ENCODE measurements at regions of chr3 and their contacts with region 1.

Region 1: DNA sequence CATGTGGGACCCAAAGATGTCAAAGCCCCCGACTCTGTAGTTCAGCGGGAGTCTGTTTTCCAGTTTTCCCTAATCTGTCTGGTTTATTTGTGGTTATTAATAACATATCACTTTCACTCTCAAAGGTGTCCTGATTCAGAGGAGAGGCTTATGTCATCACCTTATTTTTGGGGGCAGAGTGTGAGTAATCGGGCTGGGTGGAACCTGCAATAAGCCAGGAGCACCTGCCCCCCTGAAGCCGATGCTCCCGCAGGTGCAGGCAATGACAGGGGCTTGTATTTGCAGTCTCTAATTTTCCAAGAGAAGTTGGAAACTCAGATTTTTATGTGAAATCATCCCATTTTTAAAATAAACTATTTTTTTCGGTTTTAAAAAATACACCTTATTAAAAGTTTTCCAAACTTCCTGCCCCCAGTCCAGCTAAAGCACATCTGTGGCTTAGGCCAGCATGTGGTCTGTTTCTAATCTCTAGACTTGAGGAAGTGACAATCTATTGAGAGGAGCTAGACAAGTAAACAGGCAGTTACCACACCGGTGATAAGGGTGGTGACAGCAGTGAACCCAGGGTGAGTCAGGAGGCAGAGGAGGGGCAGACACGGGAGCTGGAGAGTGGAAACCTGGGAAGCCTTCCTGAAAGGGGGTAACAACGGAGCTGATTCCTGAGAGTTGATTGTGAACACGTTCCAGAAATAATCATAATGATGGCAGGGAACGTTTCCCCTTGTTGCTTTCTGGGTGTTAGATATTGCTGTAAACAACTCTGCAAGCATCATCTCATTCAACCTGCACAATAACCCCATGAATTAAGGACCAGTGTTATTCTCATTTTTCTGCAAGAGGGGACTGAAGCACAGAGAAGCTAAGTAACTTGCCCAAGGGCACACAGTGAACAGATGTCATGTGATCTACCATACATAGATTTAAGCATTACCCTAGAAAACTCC is 37.3 kb downstream of the BHLHE40 start:
- DNase-seq: peak; percentile 85
- H3K4me3 ChIP-seq: no peak overlapping the region
- H3K27ac ChIP-seq: peak overlapping the region; percentile 86
- H3K4me1 ChIP-seq: peaks cover 35% of the 10 kb centered on the region
- H3K27me3 ChIP-seq: no peaks in the 10 kb centered on the region
- CTCF ChIP-seq: no peak
- POLR2A ChIP-seq: peak; percentile 34

Region 2: GRCh38 chr3:4986782-4987537 is 29.5 kb before region 1 on chr3:
- CTCF ChIA-PET with region 1: interaction called, 327 read pairs
- POLR2A ChIA-PET with region 1: interaction called, 5 read pairs
- dilution Hi-C with region 1: no loop called
- intact Hi-C with region 1: loop called (anchors 1 kb)
- DNase-seq: peak; percentile 97
- H3K4me3 ChIP-seq: peak overlapping the region in 2 of 3 experiments; percentile 1 to 25
- H3K27ac ChIP-seq: peak overlapping the region; percentile 100
- H3K4me1 ChIP-seq: peaks cover 56% of the 10 kb centered on the region
- H3K27me3 ChIP-seq: no peaks in the 10 kb centered on the region
- CTCF ChIP-seq: no peak
- POLR2A ChIP-seq: no peak

Region 3: DNA sequence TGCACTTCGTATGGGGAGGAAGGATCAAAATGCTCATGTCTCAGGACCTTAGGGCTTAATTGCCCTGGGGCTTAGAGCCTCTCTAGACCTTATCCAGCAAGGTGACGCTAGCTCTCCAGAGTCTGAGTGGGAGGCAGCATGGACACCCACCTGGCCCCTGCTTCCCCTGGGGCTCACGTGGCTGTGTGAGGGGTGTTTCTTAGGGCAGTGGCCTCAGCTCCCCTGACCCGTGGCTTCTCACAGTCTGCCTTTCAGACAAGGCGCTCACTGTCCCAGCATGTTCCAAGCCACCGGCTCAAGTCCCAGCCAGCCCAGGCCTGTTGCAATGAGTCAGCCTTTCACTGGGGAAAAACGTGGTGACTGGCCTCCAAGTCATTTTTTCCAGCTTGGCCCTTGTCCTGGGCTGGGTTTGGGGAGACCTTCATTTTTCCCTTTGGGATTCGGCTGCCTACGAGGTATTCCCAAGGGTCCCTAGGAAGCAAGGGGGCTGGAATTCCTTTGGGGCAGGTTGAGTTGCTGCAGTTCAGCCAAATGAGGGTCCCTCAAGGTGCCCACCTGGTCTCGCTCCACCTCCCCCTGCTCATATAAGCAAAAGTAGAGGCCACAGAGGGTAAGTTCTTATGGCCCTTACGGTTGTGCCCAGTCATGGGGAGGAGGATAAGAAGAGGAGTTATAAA is 21.5 kb before region 1 on chr3:
- CTCF ChIA-PET with region 1: interaction called, 8 read pairs
- POLR2A ChIA-PET with region 1: interaction called, 3 read pairs
- dilution Hi-C with region 1: no loop called
- intact Hi-C with region 1: loop called (anchors 2 kb)
- DNase-seq: peak; percentile 63
- H3K4me3 ChIP-seq: no peak overlapping the region
- H3K27ac ChIP-seq: peak overlapping the region; percentile 74
- H3K4me1 ChIP-seq: peaks cover 22% of the 10 kb centered on the region
- H3K27me3 ChIP-seq: no peaks in the 10 kb centered on the region
- CTCF ChIP-seq: no peak
- POLR2A ChIP-seq: no peak

Measured in endothelial cell of umbilical vein (primary cell).